OCI-LY7 (cell line): ENCODE measurements at regions of chr2 and their contacts with region 1.

Region 1: DNA sequence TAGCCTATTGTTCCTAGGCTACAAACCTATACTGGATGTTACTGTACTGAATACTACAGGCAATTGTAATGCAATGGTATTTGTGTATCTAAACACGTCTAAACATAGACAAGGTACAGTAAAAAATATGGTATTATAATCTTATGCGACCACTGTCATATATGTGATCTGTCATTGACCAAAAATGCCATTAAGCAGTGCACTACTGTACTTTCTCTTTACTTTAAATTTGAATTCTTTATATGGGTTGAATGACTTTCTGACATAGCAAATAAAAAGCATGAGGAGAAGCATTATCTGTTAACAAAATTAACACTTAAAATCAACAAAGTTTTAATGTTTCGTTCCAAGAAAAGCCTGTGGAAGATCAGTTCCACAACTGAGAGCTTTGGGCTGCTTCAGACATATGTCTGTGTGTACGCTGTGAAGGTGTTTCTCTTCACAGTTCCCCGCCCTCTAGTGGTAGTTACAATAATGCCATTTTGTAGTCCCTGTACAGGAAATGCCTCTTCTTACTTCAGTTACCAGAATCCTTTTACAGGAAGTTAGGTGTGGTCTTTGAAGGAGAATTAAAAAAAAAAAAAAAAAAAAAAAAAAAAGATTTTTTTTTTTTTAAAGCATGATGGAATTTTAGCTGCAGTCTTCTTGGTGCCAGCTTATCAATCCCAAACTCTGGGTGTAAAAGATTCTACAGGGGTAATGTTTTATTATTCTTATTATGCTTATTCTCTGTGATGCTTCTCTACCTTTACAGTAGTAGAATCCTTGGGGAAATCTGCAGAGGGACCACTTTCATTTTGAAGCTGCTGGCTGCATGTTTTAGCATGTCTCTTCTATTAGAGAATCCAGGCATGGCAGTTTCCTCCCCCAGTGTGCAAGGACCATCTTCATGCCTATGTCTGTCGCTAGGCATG is 54.5 kb downstream of the SCN2A start:
- DNase-seq: peak; percentile 88
- H3K4me3 ChIP-seq: no peak overlapping the region
- H3K27ac ChIP-seq: no peak overlapping the region
- H3K4me1 ChIP-seq: peaks cover 4% of the 10 kb centered on the region
- CTCF ChIP-seq: peak; percentile 83

Region 2: GRCh38 chr2:164992818-164993217 is 300.9 kb before region 1 on chr2:
- CTCF ChIA-PET with region 1: interaction called, 4 read pairs
- POLR2A ChIA-PET with region 1: no interaction called
- intact Hi-C with region 1: loop called (anchors 5 kb)
- DNase-seq: peak; percentile 81
- H3K4me3 ChIP-seq: no peak overlapping the region
- H3K27ac ChIP-seq: no peak overlapping the region
- H3K4me1 ChIP-seq: peaks cover 15% of the 10 kb centered on the region
- CTCF ChIP-seq: peak; percentile 79

Region 3: GRCh38 chr2:165015052-165015642 is 278.6 kb before region 1 on chr2:
- CTCF ChIA-PET with region 1: no interaction called
- POLR2A ChIA-PET with region 1: no interaction called
- intact Hi-C with region 1: loop called (anchors 5 kb)
- DNase-seq: peak; percentile 72
- H3K4me3 ChIP-seq: no peak overlapping the region
- H3K27ac ChIP-seq: no peak overlapping the region
- H3K4me1 ChIP-seq: peaks cover 5% of the 10 kb centered on the region
- CTCF ChIP-seq: peak; percentile 98

Region 4: DNA sequence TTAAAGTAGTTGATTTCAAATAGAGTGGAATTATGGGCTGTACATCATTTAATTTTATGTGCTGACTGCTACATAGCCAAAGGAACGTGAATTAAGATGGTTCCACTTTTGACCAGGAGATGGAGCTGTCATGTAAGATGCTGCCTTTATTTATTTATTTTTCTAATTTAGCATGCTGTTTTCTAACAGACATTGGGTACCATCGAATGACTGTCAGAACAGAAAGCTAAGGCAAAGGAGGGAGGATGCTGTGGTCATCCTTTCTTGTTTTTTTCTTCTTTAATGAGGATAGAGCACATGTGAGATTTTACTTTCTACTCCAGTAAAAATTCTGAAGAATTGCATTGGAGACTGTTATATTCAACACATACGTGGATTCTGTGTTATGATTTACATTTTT is 54.5 kb before region 1 on chr2 and contains the start of gene SCN2A:
- CTCF ChIA-PET with region 1: no interaction called
- POLR2A ChIA-PET with region 1: interaction called, 3 read pairs
- intact Hi-C with region 1: loop called (anchors 5 kb)
- DNase-seq: peak; percentile 51
- H3K4me3 ChIP-seq: no peak within 1 kb of the TSS
- H3K27ac ChIP-seq: no peak within 1 kb of the TSS
- H3K4me1 ChIP-seq: no peaks in the 10 kb centered on the region
- CTCF ChIP-seq: peak; percentile 87
- total RNA-seq, gene SCN2A: 0.03 TPM in 1 of 2 replicates, not detected in the other